Adrenal gland (tissue), 19 donors: ENCODE measurements at regions of chr14 and their contacts with region 1.

Region 1: GRCh38 chr14:99604283-99604765 is 317 bp upstream of the CCDC85C start:
- DNase-seq: peak; percentile 93 to 97 (median 95)
- H3K4me3 ChIP-seq: peak overlapping the region in 3 of 4 donors; percentile 55 to 75 (median 62)
- H3K27ac ChIP-seq: peak overlapping the region; percentile 41 to 88 (median 72)
- H3K4me1 ChIP-seq: peaks cover 42 to 43% of the 10 kb centered on the region in 2 donors
- H3K27me3 ChIP-seq: no peaks in the 10 kb centered on the region
- CTCF ChIP-seq: no peak
- POLR2A ChIP-seq: peak in 1 of 2 donors; percentile 70

Region 2: DNA sequence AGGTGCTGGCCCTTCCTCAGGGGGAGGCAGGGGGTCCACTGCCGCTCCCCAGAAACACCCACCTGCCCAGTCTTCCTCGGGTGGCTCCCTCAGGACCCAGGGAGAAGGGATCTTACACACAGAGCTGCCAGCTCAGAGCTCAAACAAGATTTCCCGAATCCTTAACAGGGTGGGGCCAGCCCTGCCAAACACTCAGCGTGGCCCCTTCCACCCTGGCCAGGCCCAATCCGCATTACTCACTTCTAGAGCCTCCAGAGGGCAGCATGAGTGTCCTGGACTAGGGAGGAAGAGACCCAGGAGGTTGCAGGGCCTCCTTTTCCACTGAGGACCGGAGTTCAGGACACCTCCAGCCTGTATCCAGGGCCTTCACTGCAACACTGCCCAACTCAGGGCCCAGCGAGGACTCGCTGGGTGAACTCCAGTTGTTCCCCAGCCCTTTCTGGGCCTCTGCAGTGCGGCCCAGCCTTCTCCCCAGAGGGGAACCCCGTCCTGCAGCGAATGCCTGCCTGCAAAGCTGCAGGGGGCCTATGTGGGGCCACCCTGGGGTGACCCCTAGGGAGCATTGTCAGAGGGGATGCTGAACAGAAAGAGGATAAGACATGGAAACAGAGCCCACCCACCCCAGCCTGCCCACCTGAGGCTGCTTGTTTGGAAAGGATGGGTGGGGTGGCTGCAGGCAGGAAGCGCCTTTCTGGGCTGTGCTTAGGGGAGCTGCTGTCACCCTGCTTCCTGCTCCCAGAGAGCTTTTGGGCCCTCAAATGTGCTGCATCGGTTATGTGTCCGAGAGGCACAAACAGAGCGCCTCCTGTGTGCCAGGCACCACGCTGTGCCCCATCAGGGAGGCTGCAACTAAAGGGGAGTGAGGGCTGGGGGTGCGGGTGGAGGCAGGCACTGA is 79.3 kb before region 1 on chr14:
- intact Hi-C with region 1: no loop called
- DNase-seq: peak in 1 of 7 donors; percentile 33
- H3K4me3 ChIP-seq: no peak overlapping the region
- H3K27ac ChIP-seq: peak overlapping the region in 1 of 5 donors; percentile 45
- H3K4me1 ChIP-seq: peaks cover 12 to 15% of the 10 kb centered on the region in 2 donors
- H3K27me3 ChIP-seq: no peaks in the 10 kb centered on the region
- CTCF ChIP-seq: peak in 2 of 6 experiments; percentile 17 to 20
- POLR2A ChIP-seq: no peak

Region 3: GRCh38 chr14:99563233-99564129 is 40.8 kb before region 1 on chr14:
- intact Hi-C with region 1: loop called in 1 of 2 experiments (anchors 5 kb)
- DNase-seq: peak; percentile 86 to 96 (median 93)
- H3K4me3 ChIP-seq: no peak overlapping the region
- H3K27ac ChIP-seq: peak overlapping the region in 3 of 5 donors; percentile 65 to 78 (median 71)
- H3K4me1 ChIP-seq: peaks cover 51 to 72% of the 10 kb centered on the region in 2 donors
- H3K27me3 ChIP-seq: no peaks in the 10 kb centered on the region
- CTCF ChIP-seq: peak; percentile 19 to 70 (median 65)
- POLR2A ChIP-seq: peak in 1 of 2 donors; percentile 19